ENCODE measurements at regions of chr22 and their contacts with region 1.

Region 1: GRCh38 chr22:28247667-28248363 is 328.8 kb upstream of the PITPNB start:
- DNase-seq: no peak
- ATAC-seq: no peak

Region 2: GRCh38 chr22:28075358-28075981 is 172.3 kb before region 1 on chr22:
- intact Hi-C with region 1: loop called (anchors 10 kb)
- DNase-seq: no peak
- ATAC-seq: peak; percentile 84

Region 3: DNA sequence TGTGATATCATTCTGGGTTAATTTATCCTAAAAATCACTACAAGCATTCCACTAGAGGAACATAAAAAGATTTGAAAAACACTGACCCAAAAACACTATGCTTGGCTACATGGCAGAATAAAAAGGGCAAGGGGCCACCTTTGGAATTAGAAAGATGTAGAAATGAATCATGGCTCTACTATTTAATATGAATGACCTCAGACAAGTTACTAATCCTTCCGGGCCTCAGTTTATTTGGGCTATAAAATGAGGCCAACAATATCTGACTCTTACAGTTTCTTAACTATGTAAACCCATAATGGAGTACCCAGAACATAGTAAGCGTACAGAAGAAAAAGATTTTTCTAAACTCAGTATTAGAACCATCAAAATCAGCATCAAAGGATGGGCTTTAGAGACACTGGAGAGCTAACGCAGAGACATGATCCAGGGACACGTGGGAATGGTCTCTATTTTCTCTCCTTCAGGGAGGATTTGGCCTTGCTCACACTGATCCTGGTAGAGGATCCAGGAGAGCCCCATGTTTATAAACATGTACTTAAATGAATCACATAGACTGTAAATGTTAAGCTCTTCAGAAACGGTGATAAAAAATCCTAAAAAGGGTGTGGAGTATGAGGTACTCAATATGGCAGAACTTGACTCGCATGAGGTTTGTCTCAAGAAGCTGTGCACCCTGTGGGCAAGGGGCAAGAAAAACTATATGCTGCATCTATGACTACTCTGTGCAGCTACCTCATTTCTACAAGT is 40.4 kb before region 1 on chr22:
- intact Hi-C with region 1: no loop called
- DNase-seq: no peak
- ATAC-seq: no peak